CD4-positive, alpha-beta memory T cell (primary cell): ENCODE measurements at regions of chr15 and their contacts with region 1.

Region 1: DNA sequence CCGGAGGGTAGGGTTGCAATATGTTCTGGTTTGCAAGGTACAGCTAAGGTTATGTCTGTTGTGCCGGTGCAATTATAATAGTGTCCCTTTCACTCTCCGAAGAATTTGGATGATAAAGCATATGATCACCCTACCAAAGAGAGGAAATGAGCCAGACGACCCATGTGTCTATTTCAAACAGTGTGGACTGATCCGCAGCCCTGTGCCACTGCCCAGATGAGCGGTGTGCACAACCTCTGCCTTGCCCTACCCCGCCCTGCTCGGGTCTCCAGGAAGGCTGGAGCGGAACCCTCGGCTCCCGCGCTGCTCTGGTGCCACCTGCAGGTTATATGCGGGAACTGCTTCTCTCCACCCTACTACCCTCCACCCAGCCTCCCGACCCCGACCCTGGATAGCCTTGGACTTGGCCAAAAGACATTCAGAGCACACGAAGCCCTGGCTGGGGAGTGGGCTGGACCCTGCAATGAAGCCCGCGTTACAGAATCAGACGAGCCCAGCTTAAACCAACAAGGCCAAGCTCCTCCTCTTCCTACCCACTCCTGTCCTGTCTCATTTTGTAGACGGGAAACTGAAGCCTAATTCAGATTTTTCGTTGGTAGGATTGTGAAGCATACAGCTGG is 68.4 kb upstream of the CHRNB4 start:
- DNase-seq: peak in 4 of 5 donors; percentile 47 to 50 (median 48)
- H3K4me3 ChIP-seq: no peak overlapping the region
- H3K4me3 Mint-ChIP-seq: peak overlapping the region in 3 of 8 donors; percentile 16 to 56 (median 49)
- H3K27ac ChIP-seq: no peak overlapping the region
- H3K27ac Mint-ChIP-seq: no peak overlapping the region
- H3K4me1 ChIP-seq: peaks cover 6% of the 10 kb centered on the region
- H3K4me1 Mint-ChIP-seq: peaks cover 2 to 5% (median 4%) of the 10 kb centered on the region in 4 donors
- H3K27me3 ChIP-seq: no peaks in the 10 kb centered on the region
- H3K27me3 Mint-ChIP-seq: peaks cover 21 to 23% of the 10 kb centered on the region in 2 donors

Region 2: GRCh38 chr15:77959432-77959879 is 749.9 kb before region 1 on chr15:
- CTCF ChIA-PET with region 1: no interaction called
- POLR2A ChIA-PET with region 1: no interaction called
- intact Hi-C with region 1: loop called (anchors 1 kb)
- DNase-seq: peak; percentile 60 to 71 (median 67)
- H3K4me3 ChIP-seq: no peak overlapping the region
- H3K4me3 Mint-ChIP-seq: peak overlapping the region in 1 of 8 donors; percentile 56
- H3K27ac ChIP-seq: no peak overlapping the region
- H3K27ac Mint-ChIP-seq: no peak overlapping the region
- H3K4me1 ChIP-seq: no peaks in the 10 kb centered on the region
- H3K4me1 Mint-ChIP-seq: peaks cover 1 to 8% (median 6%) of the 10 kb centered on the region in 4 donors
- H3K27me3 ChIP-seq: no peaks in the 10 kb centered on the region
- H3K27me3 Mint-ChIP-seq: peaks cover 0 to 2% of the 10 kb centered on the region in 2 donors

Region 3: GRCh38 chr15:78618490-78618934 is 90.9 kb before region 1 on chr15:
- CTCF ChIA-PET with region 1: interaction called, 5 read pairs
- POLR2A ChIA-PET with region 1: no interaction called
- intact Hi-C with region 1: loop called (anchors 1 kb)
- DNase-seq: peak; percentile 45 to 75 (median 60)
- H3K4me3 ChIP-seq: no peak overlapping the region
- H3K4me3 Mint-ChIP-seq: peak overlapping the region in 3 of 8 donors; percentile 43 to 71 (median 55)
- H3K27ac ChIP-seq: no peak overlapping the region
- H3K27ac Mint-ChIP-seq: no peak overlapping the region
- H3K4me1 ChIP-seq: no peaks in the 10 kb centered on the region
- H3K4me1 Mint-ChIP-seq: peaks cover 2 to 18% (median 10%) of the 10 kb centered on the region in 4 donors
- H3K27me3 ChIP-seq: peaks cover 7% of the 10 kb centered on the region
- H3K27me3 Mint-ChIP-seq: peaks cover 31 to 34% of the 10 kb centered on the region in 2 donors

Region 4: GRCh38 chr15:78638658-78639314 is 70.6 kb before region 1 on chr15:
- CTCF ChIA-PET with region 1: interaction called, 18 read pairs
- POLR2A ChIA-PET with region 1: no interaction called
- intact Hi-C with region 1: no loop called
- DNase-seq: peak in 4 of 5 donors; percentile 12 to 27 (median 13)
- H3K4me3 ChIP-seq: no peak overlapping the region
- H3K4me3 Mint-ChIP-seq: peak overlapping the region in 1 of 8 donors; percentile 35
- H3K27ac ChIP-seq: no peak overlapping the region
- H3K27ac Mint-ChIP-seq: no peak overlapping the region
- H3K4me1 ChIP-seq: peaks cover 4% of the 10 kb centered on the region
- H3K4me1 Mint-ChIP-seq: peaks cover 2 to 10% (median 6%) of the 10 kb centered on the region in 4 donors
- H3K27me3 ChIP-seq: no peaks in the 10 kb centered on the region
- H3K27me3 Mint-ChIP-seq: peaks cover 6 to 19% of the 10 kb centered on the region in 2 donors